Vagina (tissue), 2 donors: ENCODE measurements at regions of chr11 and their contacts with region 1.

Region 1: DNA sequence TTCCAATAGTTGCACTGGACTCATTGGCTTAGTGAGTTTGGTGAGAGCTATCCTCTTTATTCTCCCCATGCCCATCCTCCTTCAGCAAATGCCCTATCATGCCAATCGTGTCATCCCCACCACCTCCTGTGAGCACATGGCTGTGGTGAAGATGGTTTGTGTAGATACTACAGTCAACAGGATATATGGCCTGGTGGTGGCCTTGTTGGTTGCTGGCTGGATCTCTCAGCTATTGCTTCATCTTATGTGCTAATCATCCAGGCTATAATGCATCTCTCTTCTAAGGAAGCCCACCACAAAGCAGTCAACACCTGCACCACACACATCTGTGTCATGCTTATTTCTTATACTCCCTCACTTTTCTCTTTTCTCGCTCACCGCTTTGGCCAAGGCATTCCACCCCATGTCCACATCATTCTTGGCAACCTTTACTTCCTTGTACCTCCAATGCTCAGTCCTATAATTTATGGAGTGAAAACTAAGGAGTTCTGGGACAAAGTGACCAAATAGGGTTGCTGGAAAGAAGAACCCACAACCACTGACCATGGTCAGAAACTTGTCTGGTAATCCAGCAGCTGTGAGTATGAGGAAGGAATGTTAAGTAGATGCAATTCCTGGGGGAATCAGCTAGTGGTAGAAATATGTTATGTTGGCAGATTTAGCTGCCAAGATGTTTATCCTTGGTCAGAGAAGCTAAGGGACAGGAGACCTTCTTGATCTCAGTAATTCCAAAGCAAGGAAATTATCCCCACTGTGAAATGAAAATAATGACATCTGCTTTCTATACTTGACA is 16.3 kb upstream of the OR56B1 start:
- DNase-seq: no peak
- H3K4me3 ChIP-seq: no peak overlapping the region
- H3K27ac ChIP-seq: no peak overlapping the region
- H3K4me1 ChIP-seq: no peaks in the 10 kb centered on the region
- H3K27me3 ChIP-seq: no peaks in the 10 kb centered on the region
- CTCF ChIP-seq: no peak
- POLR2A ChIP-seq: no peak

Region 2: GRCh38 chr11:5658318-5658717 is 61.6 kb before region 1 on chr11:
- intact Hi-C with region 1: loop called (anchors 10 kb)
- DNase-seq: no peak
- H3K4me3 ChIP-seq: no peak overlapping the region
- H3K27ac ChIP-seq: no peak overlapping the region
- H3K4me1 ChIP-seq: no peaks in the 10 kb centered on the region
- H3K27me3 ChIP-seq: no peaks in the 10 kb centered on the region
- CTCF ChIP-seq: no peak
- POLR2A ChIP-seq: no peak